ENCODE measurements at regions of chr4 and their contacts with region 1.

Region 1: GRCh38 chr4:187995322-187996207 is at the start of gene ZFP42:
- DNase-seq: peak; percentile 82
- ATAC-seq: peak; percentile 89
- H3K4me3 Mint-ChIP-seq: peak within 1 kb of the TSS; percentile 91
- H3K27ac Mint-ChIP-seq: peak within 1 kb of the TSS; percentile 98
- H3K4me1 Mint-ChIP-seq: peaks cover 42% of the 10 kb centered on the region
- H3K27me3 Mint-ChIP-seq: no peaks in the 10 kb centered on the region; the same call in 1 of the 2 replicates
- CTCF ChIP-seq: no peak
- total RNA-seq, gene ZFP42: 120 to 128 TPM (median 122 TPM) in 3 replicates

Region 2: DNA sequence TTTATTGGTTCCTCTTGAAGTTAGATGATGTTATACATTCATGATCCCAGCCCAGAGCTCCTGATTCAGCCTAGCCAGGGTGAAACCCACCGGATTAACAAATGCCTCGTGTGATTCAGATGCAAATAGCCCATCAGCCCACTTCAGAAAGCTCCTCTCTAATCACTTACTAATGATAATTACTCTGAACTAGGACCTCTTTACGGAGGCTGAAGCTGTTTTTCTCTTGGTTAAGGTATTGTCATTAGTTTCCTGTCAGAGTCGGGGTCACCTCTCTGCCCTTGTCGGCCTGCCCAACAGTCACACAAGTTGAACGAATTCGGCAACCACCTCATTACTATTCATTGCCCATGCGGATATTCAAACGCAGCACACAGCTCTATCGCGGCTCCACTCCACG is 36.6 kb after region 1 on chr4:
- CTCF ChIA-PET with region 1: interaction called, 6 read pairs
- POLR2A ChIA-PET with region 1: interaction called, 14 read pairs
- DNase-seq: peak; percentile 37
- ATAC-seq: peak; percentile 81
- H3K4me3 Mint-ChIP-seq: peak overlapping the region; percentile 55
- H3K27ac Mint-ChIP-seq: peak overlapping the region; percentile 95
- H3K4me1 Mint-ChIP-seq: peaks cover 50% of the 10 kb centered on the region
- H3K27me3 Mint-ChIP-seq: no peaks in the 10 kb centered on the region
- CTCF ChIP-seq: no peak

Region 3: GRCh38 chr4:188042191-188042590 is 46.6 kb after region 1 on chr4:
- CTCF ChIA-PET with region 1: no interaction called
- POLR2A ChIA-PET with region 1: no interaction called
- DNase-seq: peak; percentile 17
- ATAC-seq: peak; percentile 26
- H3K4me3 Mint-ChIP-seq: no peak overlapping the region
- H3K27ac Mint-ChIP-seq: no peak overlapping the region
- H3K4me1 Mint-ChIP-seq: peaks cover 28% of the 10 kb centered on the region
- H3K27me3 Mint-ChIP-seq: no peaks in the 10 kb centered on the region
- CTCF ChIP-seq: no peak

Region 4: DNA sequence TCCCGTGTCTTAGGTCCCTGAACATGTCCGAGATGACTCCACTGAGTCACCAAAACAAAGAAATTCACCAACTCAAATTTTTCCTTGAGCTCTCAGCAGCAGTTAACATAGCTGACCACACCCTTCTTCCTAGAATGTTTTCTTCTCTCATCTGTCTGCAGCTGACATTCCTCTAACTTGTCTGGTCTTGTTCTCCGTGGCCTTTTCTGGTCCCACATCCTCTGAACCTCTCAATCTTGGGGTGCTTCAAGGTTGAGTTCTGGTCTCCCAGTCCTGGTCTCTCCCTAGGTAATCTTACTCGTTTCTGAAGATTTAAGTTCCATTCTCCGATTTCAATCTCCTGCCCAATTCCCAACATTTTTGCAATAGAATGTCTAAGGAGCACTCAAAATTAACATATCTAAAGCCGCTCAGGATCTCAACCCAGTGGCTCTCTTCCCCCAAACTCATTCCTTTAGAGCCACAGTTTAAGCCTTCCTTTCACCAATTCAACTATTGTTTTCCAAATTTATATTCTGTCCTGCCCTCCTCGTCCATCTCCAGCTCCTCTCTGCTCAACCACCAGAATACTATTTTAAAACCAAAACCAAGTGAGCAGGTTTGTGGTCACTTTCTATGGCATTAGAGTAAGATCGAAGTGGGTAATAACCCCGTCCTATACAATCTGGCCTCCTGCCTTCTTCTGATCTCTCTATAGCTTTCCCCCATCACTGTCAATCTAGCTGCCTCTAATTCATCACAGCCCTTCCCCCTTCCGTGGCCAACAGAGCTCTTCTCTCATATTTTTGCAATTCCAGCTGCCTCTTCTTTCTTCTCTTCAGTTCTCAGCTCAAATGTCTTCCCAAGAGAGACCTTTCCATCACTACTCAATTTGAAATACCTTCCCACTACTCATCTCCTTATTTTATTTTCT is 112.6 kb after region 1 on chr4:
- CTCF ChIA-PET with region 1: interaction called, 6 read pairs
- POLR2A ChIA-PET with region 1: interaction called, 14 read pairs
- DNase-seq: no peak
- ATAC-seq: peak; percentile 88
- H3K4me3 Mint-ChIP-seq: peak overlapping the region; percentile 74
- H3K27ac Mint-ChIP-seq: peak overlapping the region; percentile 100
- H3K4me1 Mint-ChIP-seq: peaks cover 57% of the 10 kb centered on the region
- H3K27me3 Mint-ChIP-seq: no peaks in the 10 kb centered on the region
- CTCF ChIP-seq: no peak